ENCODE measurements at regions of chr3 and their contacts with region 1.

Region 1: DNA sequence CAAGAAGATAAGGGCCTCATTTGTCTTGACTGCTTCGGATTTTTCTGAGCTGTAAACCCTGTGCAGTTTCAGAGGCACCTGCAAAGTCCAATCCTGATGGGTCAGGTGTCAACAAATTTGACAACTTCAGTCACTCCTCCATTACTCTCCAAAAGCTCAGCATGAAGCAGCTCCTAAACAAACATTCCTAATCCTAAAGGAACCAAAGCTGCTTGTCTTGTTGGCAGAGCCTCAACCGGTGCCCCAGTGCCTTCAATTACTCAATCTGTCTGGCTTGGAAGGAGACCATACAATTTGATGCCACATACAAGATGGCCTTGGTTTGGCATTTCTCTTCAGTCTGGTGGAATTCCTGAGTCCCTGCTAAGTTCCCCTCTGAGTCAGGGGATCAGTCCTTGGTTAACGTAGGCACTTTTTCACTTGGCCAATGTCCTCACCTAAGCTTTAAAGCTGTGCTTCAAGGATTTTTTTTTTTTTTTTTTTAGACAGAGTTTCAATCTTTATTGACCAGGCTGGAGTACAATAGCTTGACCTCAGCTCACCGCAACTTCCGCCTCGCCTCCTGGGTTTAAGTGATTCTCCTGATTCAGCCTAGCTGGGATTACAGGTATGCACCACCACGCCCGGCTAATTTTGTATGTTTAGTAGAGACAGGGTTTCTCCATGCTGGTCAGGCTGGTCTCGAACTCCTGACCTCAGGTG is 220.1 kb downstream of the STT3B start:
- DNase-seq: peak; percentile 66 to 77
- H3K4me3 ChIP-seq: no peak overlapping the region
- H3K4me3 Mint-ChIP-seq: no peak overlapping the region
- H3K27ac Mint-ChIP-seq: no peak overlapping the region
- H3K4me1 ChIP-seq: peaks cover 46% of the 10 kb centered on the region
- H3K4me1 Mint-ChIP-seq: peaks cover 38% of the 10 kb centered on the region
- H3K27me3 ChIP-seq: no peaks in the 10 kb centered on the region
- H3K27me3 Mint-ChIP-seq: no peaks in the 10 kb centered on the region
- CTCF ChIP-seq: no peak

Region 2: GRCh38 chr3:31724661-31725060 is 28.2 kb before region 1 on chr3:
- CTCF ChIA-PET with region 1: interaction called, 9 read pairs
- POLR2A ChIA-PET with region 1: interaction called, 3 read pairs
- intact Hi-C with region 1: loop called (anchors 2 kb)
- DNase-seq: peak in 1 of 2 experiments; percentile 11
- H3K4me3 ChIP-seq: no peak overlapping the region
- H3K4me3 Mint-ChIP-seq: no peak overlapping the region
- H3K27ac Mint-ChIP-seq: no peak overlapping the region
- H3K4me1 ChIP-seq: no peaks in the 10 kb centered on the region; the same call in 1 of the 2 replicates
- H3K4me1 Mint-ChIP-seq: no peaks in the 10 kb centered on the region
- H3K27me3 ChIP-seq: no peaks in the 10 kb centered on the region
- H3K27me3 Mint-ChIP-seq: no peaks in the 10 kb centered on the region
- CTCF ChIP-seq: peak; percentile 28 to 50